Breast epithelium (tissue), 4 donors: ENCODE measurements at regions of chr2 and their contacts with region 1.

Region 1: GRCh38 chr2:129565551-129566109 is 413.8 kb upstream of the RAB6C start:
- DNase-seq: no peak
- H3K4me3 ChIP-seq: no peak overlapping the region
- H3K27ac ChIP-seq: no peak overlapping the region
- H3K4me1 ChIP-seq: no peaks in the 10 kb centered on the region
- H3K27me3 ChIP-seq: peaks cover 0 to 8% of the 10 kb centered on the region in 2 donors
- CTCF ChIP-seq: no peak
- POLR2A ChIP-seq: no peak

Region 2: DNA sequence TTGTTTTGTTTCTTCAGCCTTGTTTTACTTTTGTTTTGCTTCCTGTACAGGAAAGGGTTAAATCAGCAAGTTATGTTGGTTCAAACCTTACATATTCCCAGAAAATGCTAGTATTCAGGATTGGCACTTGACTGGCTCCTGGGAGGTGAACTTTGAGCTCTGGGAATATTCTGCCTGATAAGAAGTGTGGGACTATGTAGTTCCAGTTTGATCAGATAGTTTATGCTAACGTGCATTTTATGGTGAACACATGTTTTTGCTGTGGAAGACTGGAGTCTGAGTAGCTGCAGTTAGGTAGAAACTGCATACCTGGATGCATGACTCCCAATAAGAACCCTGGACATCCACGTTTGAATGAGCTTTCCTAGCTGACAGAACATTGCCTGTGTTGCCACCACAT is 643.9 kb before region 1 on chr2:
- intact Hi-C with region 1: no loop called
- DNase-seq: no peak
- H3K4me3 ChIP-seq: no peak overlapping the region
- H3K27ac ChIP-seq: no peak overlapping the region
- H3K4me1 ChIP-seq: no peaks in the 10 kb centered on the region
- H3K27me3 ChIP-seq: no peaks in the 10 kb centered on the region
- CTCF ChIP-seq: no peak
- POLR2A ChIP-seq: no peak

Region 3: DNA sequence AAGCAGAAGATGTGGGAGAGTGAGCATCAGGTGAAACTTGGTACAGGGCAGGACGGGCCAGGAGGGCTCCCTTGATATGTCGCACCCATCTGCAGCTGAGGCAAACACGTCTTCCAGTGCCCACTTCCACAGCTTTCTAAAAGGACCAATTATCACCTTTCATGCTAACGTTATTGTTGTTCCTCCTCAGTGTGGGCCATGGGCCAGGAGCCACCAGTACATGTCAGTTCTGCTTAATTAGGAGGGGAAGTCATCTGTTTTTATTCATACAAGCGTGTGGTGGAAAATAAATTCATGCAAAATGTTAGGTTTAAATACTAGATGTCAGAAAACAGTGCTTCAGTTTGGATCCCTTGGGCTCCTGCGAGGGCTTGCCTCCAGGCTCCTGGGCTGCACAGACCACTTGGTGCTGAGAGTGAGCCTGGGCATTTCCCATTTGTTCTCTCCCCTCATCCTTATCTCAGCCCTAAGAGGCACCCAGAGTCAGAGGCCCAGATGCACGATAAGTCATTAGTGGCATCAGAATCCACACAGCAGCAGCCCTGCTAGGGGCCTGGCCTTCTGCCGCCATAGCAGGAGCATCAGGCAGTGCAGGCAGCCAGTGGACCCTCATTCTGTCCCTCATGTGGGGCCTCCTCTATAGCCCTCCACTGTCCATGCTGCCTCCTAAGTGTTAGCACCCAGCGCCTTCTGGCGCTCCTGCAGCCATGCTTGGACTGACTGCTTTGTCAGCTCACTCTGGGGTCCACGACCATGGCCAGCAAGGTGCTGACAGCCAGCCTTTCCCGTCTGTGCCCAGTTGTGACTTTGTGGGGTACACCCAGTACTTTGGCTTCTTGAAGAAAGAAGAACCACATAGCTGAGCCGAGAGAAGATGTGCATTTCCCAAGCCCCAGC is 126.0 kb before region 1 on chr2:
- intact Hi-C with region 1: loop called (anchors 2 kb)
- DNase-seq: no peak
- H3K4me3 ChIP-seq: no peak overlapping the region
- H3K27ac ChIP-seq: no peak overlapping the region
- H3K4me1 ChIP-seq: no peaks in the 10 kb centered on the region
- H3K27me3 ChIP-seq: no peaks in the 10 kb centered on the region
- CTCF ChIP-seq: no peak
- POLR2A ChIP-seq: no peak

Region 4: DNA sequence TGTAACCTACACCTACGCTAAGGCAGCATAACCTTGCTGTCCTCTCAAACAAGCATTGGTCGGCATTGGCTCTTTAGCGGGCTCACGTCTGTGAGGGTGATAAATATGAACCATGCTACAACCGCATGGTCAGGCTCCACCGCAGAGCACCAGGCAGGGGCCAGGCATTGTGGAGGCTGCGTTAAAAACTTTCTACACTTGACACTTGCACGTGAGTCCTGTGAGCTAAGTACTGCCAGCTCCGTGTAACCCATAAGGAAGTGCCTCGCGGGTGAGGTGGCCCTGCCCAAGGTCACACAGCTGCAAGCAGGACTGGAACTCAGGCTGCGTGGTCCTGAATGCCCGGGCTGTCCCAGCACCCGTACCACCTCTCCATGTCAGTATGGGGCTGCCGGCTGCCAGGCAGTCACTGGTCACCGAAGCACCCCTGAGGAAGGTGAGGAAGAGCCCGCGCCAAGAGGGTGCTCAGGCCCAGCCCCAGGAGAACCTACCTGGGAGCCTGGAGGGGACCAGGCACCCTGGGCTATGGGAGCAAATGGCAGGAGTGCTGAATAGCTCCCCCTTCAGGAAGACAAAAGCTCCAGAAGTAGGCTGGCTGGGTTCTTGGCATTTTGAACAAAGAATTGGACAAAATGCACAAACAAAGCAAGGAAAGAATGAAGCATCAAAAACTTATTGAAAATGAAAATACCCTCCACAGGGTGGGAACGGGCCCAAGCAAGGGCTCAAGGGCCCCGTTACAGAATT is 142.8 kb after region 1 on chr2:
- intact Hi-C with region 1: no loop called
- DNase-seq: no peak
- H3K4me3 ChIP-seq: no peak overlapping the region
- H3K27ac ChIP-seq: no peak overlapping the region
- H3K4me1 ChIP-seq: no peaks in the 10 kb centered on the region
- H3K27me3 ChIP-seq: no peaks in the 10 kb centered on the region
- CTCF ChIP-seq: no peak
- POLR2A ChIP-seq: no peak